Activated T-helper 2 cell treated with anti-CD3 and anti-CD28 coated beads, Interferon-gamma antibody, Interleukin-2, Interleukin-4, amounts not matched to agents 10 μg/mL and 5 μg/mL and 100 μg/mL, durations not matched to agents 14 hours and 24 hours and 36 hours (primary cell): ENCODE measurements at regions of chr6 and their contacts with region 1.

Region 1: DNA sequence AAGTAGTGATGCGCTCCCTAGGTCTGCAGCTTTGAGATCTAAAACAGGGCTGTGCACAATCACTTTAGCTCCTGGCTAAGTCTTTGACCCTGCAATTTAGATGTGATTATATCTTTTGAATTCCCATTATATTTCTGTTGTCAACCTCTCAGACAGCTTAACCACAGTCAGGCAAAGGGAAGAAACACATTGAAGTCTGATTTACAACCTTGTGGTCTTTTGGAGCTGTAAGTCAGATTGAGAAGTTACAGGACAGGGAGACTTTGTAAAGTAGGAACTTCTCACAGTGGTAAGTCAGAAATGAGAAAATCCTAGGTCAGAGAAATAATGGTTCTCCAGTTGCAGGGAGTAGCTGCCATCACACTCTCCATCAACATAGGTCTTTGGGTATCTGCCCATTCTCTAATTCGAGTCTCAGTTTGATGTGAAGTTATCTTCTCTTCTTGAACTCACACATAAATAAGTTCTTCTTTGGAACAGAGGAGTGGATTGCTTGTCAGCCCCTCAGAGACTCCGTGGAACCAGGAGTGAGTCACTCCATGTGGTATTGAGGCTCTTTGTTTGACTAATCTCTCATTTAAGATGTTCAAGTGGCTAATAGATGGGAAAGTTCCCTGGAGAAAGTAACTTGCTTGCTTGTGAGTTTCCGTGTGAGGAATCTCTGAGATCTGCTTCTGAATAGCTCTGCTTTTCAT is 35.0 kb upstream of the SGK1 start:
- DNase-seq: no peak
- H3K4me3 Mint-ChIP-seq: no peak overlapping the region
- H3K27ac Mint-ChIP-seq: peak overlapping the region; percentile 75
- H3K4me1 Mint-ChIP-seq: peaks cover 26% of the 10 kb centered on the region
- H3K27me3 Mint-ChIP-seq: no peaks in the 10 kb centered on the region

Region 2: DNA sequence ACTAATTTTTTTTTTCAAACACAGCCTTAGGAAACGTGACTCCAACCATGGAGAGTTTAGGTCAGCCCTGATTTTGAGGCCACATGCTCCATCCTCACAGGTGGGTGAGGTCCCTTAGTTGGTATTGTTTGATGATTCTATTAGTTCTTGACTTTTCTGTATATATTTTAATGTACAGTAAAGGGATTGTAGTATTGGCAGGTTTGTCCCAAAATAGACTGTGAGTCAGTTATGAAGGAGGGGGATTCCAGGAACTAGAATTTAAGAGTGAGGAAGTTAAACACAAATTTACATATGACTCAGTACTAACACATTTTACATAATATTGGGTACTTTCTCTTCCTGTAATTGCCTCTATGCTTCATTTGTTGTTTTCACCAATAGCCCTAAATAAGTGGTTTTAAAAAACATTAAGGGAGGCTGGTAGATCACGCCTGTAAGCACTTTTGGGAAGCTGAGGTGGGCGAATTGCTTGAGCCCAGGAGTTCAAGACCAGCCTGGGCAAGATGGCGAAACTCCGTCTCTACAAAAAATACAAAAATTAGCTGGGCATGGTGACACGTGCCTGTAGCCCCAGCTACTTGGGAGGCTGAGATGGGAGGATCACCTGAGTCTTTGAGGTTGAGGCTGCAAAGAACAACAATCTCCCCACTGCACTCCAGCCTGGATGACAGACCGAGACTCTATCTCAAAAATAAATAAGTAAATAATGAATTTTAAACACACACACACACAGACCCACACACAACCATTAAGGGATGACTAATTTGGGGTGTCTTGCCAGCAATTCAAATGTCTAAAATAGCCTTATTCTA is 116.8 kb before region 1 on chr6:
- intact Hi-C with region 1: loop called (anchors 1 kb)
- DNase-seq: no peak
- H3K4me3 Mint-ChIP-seq: no peak overlapping the region
- H3K27ac Mint-ChIP-seq: peak overlapping the region; percentile 58
- H3K4me1 Mint-ChIP-seq: peaks cover 38% of the 10 kb centered on the region
- H3K27me3 Mint-ChIP-seq: no peaks in the 10 kb centered on the region